ENCODE measurements at regions of chr11 and their contacts with region 1.

Region 1: DNA sequence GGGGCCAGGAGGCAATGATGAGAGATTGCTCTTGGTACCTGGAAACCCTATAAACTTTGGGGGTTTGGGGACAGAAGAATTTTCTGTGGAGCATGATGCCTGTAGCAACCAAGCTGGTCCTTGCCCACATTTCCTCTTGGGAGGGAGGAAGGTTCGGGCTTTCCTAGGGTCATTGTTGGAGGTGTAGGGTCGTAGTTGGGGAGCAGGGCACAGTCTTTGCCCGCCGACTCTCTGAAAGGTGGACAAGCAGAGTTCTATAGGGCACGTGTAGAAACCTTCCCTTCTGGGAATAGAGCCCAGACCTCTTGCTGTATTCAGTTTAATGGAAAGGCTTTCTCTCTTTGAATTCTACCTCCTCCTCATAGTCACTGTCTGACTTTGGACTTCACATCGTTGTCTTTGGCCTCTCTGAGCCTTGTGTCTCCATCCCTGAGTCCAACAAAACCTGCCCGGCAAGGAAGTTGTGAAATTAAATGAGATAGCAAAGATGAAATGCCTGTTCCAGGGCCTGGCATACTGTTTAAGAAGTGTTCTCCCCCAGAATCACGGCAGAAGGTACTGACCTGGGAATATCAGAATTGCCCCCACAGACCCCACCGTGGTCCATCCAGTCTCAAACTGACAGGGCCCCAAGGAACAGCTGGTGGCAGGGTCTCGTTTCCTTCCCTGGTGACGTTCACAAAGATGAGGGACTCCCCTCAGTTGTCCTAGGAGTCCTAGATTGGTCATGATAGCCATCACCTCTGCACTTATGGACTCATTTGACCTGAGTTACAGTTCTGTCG is 1.6 kb downstream of the PRDM11 start:
- DNase-seq: peak in 1 of 2 donors; percentile 31
- H3K4me3 ChIP-seq: peak overlapping the region; percentile 74 to 80 (median 75)
- H3K27ac ChIP-seq: peak overlapping the region in 1 of 2 donors; percentile 86
- H3K4me1 ChIP-seq: peaks cover 0 to 5% of the 10 kb centered on the region in 2 donors
- H3K27me3 ChIP-seq: no peaks in the 10 kb centered on the region
- CTCF ChIP-seq: no peak
- POLR2A ChIP-seq: no peak

Region 2: GRCh38 chr11:45176996-45177395 is 28.9 kb after region 1 on chr11:
- intact Hi-C with region 1: loop called (anchors 1 kb)
- DNase-seq: no peak
- H3K4me3 ChIP-seq: no peak overlapping the region
- H3K27ac ChIP-seq: no peak overlapping the region
- H3K4me1 ChIP-seq: peaks cover 0 to 4% of the 10 kb centered on the region in 2 donors
- H3K27me3 ChIP-seq: no peaks in the 10 kb centered on the region
- CTCF ChIP-seq: no peak
- POLR2A ChIP-seq: no peak

Measured in breast epithelium (tissue), 4 donors.